AG04449 (cell line): ENCODE measurements at regions of chr15 and their contacts with region 1.

Region 1: DNA sequence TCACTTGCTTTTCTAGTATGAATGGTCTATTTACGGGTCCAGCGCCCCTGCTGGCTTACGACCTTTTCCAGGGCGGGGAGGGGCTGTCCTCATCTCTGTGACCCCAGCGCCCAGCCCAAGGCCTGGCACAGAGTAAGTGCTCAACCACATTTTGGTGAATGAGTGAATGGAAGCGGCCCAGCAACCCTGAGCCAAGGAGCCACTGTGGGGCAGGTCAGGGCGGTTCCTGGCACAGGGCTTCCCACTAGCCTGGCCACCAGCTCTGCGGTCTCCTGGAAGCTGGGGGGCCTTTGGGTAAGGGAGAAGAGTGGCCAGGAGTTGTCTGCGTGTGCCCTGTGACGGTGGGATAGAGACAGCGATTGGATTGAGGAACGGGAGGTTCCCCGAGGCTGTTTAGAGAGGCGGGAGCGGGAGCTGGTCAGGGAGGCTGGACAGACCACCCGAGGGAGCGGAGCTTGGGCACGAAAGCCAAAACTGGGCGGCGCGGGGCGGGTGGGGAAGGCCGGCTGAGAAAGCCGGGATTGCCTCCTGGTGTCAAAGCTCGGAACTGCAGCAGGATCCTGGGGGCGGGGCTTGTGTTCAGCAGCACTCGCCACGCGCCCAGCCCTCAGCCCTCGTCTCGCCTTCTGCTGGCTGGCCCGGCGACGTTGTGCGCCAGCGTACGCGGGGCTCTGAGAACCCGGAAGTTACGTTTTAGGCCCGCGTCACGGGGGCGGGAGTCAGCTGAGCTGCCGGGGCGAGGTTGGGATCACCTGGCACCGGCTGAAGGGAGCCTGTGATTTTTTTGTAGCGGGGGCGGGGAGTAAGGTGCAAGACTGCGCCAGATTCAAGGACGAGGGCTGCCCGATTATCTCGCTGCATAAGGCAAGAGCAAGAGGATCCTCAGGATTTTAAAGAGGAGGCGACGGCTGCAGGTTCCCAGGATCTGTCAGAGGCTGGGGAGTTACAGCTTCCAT is at the start of gene VPS18:
- DNase-seq: peak; percentile 71
- H3K4me3 ChIP-seq: peak within 1 kb of the TSS; percentile 95
- CTCF ChIP-seq: peak; percentile 90

Region 2: GRCh38 chr15:40525855-40526254 is 368.2 kb before region 1 on chr15:
- CTCF ChIA-PET with region 1: interaction called, 10 read pairs
- POLR2A ChIA-PET with region 1: no interaction called
- DNase-seq: no peak
- H3K4me3 ChIP-seq: no peak overlapping the region
- CTCF ChIP-seq: no peak

Region 3: GRCh38 chr15:40694688-40695468 is 199.1 kb before region 1 on chr15 and contains the start of gene RAD51:
- CTCF ChIA-PET with region 1: interaction called, 10 read pairs
- POLR2A ChIA-PET with region 1: no interaction called
- DNase-seq: peak; percentile 59
- H3K4me3 ChIP-seq: peak within 1 kb of the TSS; percentile 96
- CTCF ChIP-seq: no peak

Region 4: GRCh38 chr15:40857601-40858341 is 36.2 kb before region 1 on chr15:
- CTCF ChIA-PET with region 1: interaction called, 228 read pairs
- POLR2A ChIA-PET with region 1: interaction called, 4 read pairs
- DNase-seq: no peak
- H3K4me3 ChIP-seq: no peak overlapping the region
- CTCF ChIP-seq: peak; percentile 99

Region 5: GRCh38 chr15:40906091-40906990 is 12.3 kb after region 1 on chr15:
- CTCF ChIA-PET with region 1: interaction called, 89 read pairs
- POLR2A ChIA-PET with region 1: interaction called, 9 read pairs
- DNase-seq: peak; percentile 65
- H3K4me3 ChIP-seq: peak overlapping the region; percentile 41
- CTCF ChIP-seq: peak; percentile 87

Region 6: DNA sequence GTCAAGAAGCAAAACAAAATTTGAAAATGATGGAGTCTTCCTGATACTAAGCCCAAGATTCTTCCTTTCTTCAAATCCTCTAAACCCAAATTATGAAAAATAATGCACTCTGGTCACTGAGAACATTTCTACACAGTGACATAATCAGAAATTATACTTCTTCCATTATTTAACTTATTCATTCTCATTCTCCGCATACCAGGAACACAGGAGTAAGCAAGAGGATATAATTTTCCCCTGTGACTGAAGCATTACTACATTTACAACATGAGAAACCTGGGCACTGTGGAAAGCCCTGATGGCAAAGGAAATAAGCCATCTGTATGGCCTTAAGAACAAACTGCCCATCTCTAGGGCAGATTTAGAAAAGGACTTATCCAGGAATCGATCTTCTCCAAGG is 289.6 kb after region 1 on chr15:
- CTCF ChIA-PET with region 1: interaction called, 46 read pairs
- POLR2A ChIA-PET with region 1: no interaction called
- DNase-seq: no peak
- H3K4me3 ChIP-seq: no peak overlapping the region
- CTCF ChIP-seq: no peak

Region 7: GRCh38 chr15:41241221-41241964 is 347.4 kb after region 1 on chr15:
- CTCF ChIA-PET with region 1: no interaction called
- POLR2A ChIA-PET with region 1: no interaction called
- DNase-seq: no peak
- H3K4me3 ChIP-seq: no peak overlapping the region
- CTCF ChIP-seq: no peak